ENCODE measurements at regions of chr6 and their contacts with region 1.

Region 1: GRCh38 chr6:129730477-129731165 is 20.6 kb upstream of the ARHGAP18 start:
- DNase-seq: peak in 2 of 4 experiments; percentile 18 to 69
- ATAC-seq: peak; percentile 75
- H3K4me3 ChIP-seq: no peak overlapping the region
- H3K27ac ChIP-seq: peak overlapping the region; percentile 79
- H3K4me1 ChIP-seq: peaks cover 10 to 26% of the 10 kb centered on the region in 2 experiments; a peak in 4 of 5 replicates
- H3K27me3 ChIP-seq: no peaks in the 10 kb centered on the region
- CTCF ChIP-seq: peak; percentile 61 to 75 (median 62); a peak in 4 of 6 replicates
- EP300 ChIP-seq: no peak; the same call in 1 of the 2 replicates
- POLR2A ChIP-seq: no peak
- RAD21 ChIP-seq: peak; percentile 89 to 97

Region 2: DNA sequence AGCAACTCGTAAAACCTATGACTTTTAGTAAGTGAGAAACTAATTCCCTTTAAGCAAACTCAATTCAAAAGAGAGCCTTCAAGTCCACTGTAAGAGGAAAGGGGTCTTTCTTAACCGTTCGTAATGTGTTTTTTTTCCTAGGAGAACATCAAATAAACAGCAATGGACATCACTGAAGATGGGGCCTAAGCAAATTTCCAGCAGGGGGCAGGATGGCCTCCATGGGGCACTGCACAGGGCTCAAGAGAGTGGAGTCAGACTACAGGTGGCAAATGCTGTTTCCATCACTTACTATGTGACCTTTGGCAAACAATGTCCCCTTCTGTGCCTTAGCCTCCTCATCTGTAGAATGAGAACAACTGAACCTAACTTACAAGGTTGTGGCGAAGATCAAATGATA is 109.4 kb before region 1 on chr6:
- CTCF ChIA-PET with region 1: interaction called, 4 read pairs
- POLR2A ChIA-PET with region 1: no interaction called
- in situ Hi-C with region 1: no loop called
- intact Hi-C with region 1: loop called (anchors 2 kb)
- DNase-seq: peak in 2 of 4 experiments; percentile 10 to 54
- ATAC-seq: peak; percentile 87
- H3K4me3 ChIP-seq: no peak overlapping the region
- H3K27ac ChIP-seq: no peak overlapping the region
- H3K4me1 ChIP-seq: no peaks in the 10 kb centered on the region
- H3K27me3 ChIP-seq: no peaks in the 10 kb centered on the region
- CTCF ChIP-seq: peak; percentile 51 to 54 (median 52); a peak in 5 of 6 replicates
- EP300 ChIP-seq: no peak
- POLR2A ChIP-seq: no peak
- RAD21 ChIP-seq: peak; percentile 39 to 68

Region 3: GRCh38 chr6:129672881-129673643 is 57.6 kb before region 1 on chr6:
- CTCF ChIA-PET with region 1: interaction called, 3 read pairs
- POLR2A ChIA-PET with region 1: interaction called, 3 read pairs
- in situ Hi-C with region 1: no loop called
- intact Hi-C with region 1: loop called (anchors 1 kb)
- DNase-seq: no peak
- ATAC-seq: no peak
- H3K4me3 ChIP-seq: no peak overlapping the region
- H3K27ac ChIP-seq: no peak overlapping the region
- H3K4me1 ChIP-seq: peaks cover 30 to 54% of the 10 kb centered on the region in 2 experiments
- H3K27me3 ChIP-seq: no peaks in the 10 kb centered on the region
- CTCF ChIP-seq: no peak
- EP300 ChIP-seq: no peak
- POLR2A ChIP-seq: no peak
- RAD21 ChIP-seq: no peak

Region 4: GRCh38 chr6:129774697-129775447 is 44.3 kb after region 1 on chr6:
- CTCF ChIA-PET with region 1: no interaction called
- POLR2A ChIA-PET with region 1: no interaction called
- in situ Hi-C with region 1: no loop called
- intact Hi-C with region 1: loop called (anchors 2 kb)
- DNase-seq: peak; percentile 76 to 89 (median 80)
- ATAC-seq: peak; percentile 96
- H3K4me3 ChIP-seq: no peak overlapping the region
- H3K27ac ChIP-seq: no peak overlapping the region; the same call in 2 of the 3 replicates
- H3K4me1 ChIP-seq: peaks cover 4 to 6% of the 10 kb centered on the region in 2 experiments; a peak in 3 of 5 replicates
- H3K27me3 ChIP-seq: no peaks in the 10 kb centered on the region
- CTCF ChIP-seq: peak; percentile 90 to 97 (median 90)
- EP300 ChIP-seq: no peak
- POLR2A ChIP-seq: no peak
- RAD21 ChIP-seq: peak; percentile 75 to 89

Region 5: GRCh38 chr6:129863664-129864063 is 133.0 kb after region 1 on chr6:
- CTCF ChIA-PET with region 1: no interaction called
- POLR2A ChIA-PET with region 1: no interaction called
- in situ Hi-C with region 1: no loop called
- intact Hi-C with region 1: loop called (anchors 2 kb)
- DNase-seq: no peak
- ATAC-seq: no peak
- H3K4me3 ChIP-seq: no peak overlapping the region
- H3K27ac ChIP-seq: no peak overlapping the region
- H3K4me1 ChIP-seq: no peaks in the 10 kb centered on the region
- H3K27me3 ChIP-seq: no peaks in the 10 kb centered on the region
- CTCF ChIP-seq: no peak
- EP300 ChIP-seq: no peak
- POLR2A ChIP-seq: no peak
- RAD21 ChIP-seq: no peak

Region 6: DNA sequence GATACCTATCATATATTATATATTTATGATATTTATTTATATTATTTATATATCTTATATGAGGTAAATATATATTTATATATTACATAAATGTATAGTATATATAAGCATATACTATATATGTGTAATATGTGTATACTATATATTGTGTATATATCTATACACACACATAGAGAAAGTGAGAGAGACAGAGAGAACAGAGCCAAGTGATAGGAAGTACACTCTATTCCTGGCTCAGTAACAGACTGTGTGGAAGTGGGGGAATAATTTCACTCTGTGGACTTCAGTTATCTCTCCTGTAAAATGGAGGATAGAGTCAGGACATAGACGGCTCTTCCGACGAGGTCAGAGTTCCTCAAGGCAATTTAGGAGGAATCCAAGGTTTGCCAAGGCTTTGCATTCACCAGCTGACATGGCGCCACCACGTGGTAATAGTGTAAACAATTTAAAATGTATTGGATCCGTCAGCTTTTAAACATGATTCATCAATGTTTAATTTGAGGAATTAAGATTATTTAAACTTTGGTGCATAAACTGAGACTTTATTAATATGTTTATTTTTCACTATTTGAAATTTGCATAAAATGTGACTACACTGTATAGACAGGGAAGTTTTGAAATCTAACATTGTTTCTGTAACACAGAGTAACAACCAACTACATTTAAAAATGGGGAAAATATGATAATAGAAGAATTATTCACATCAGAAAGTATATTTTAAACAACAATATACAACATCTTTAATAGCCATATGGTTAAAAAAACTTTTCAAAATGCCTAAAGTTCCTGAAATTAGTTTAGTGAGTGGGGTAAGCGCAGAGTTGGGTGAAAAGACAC is 205.9 kb after region 1 on chr6:
- CTCF ChIA-PET with region 1: no interaction called
- POLR2A ChIA-PET with region 1: no interaction called
- in situ Hi-C with region 1: no loop called
- intact Hi-C with region 1: loop called (anchors 5 kb)
- DNase-seq: peak; percentile 17 to 83 (median 24)
- ATAC-seq: peak; percentile 92
- H3K4me3 ChIP-seq: no peak overlapping the region
- H3K27ac ChIP-seq: no peak overlapping the region
- H3K4me1 ChIP-seq: no peaks in the 10 kb centered on the region; a peak in 1 of 5 replicates
- H3K27me3 ChIP-seq: no peaks in the 10 kb centered on the region; a peak in 1 of 5 replicates
- CTCF ChIP-seq: peak; percentile 64 to 78 (median 72)
- EP300 ChIP-seq: no peak
- POLR2A ChIP-seq: no peak
- RAD21 ChIP-seq: peak; percentile 77 to 82

Region 7: GRCh38 chr6:130020907-130021629 is 290.4 kb after region 1 on chr6:
- CTCF ChIA-PET with region 1: no interaction called
- POLR2A ChIA-PET with region 1: no interaction called
- in situ Hi-C with region 1: no loop called
- intact Hi-C with region 1: loop called (anchors 5 kb)
- DNase-seq: peak; percentile 55 to 90 (median 57)
- ATAC-seq: peak; percentile 83
- H3K4me3 ChIP-seq: peak overlapping the region; percentile 60
- H3K27ac ChIP-seq: peak overlapping the region; percentile 62; the same call in 1 of the 3 replicates
- H3K4me1 ChIP-seq: peaks cover 0 to 15% of the 10 kb centered on the region in 2 experiments; a peak in 2 of 5 replicates
- H3K27me3 ChIP-seq: no peaks in the 10 kb centered on the region
- CTCF ChIP-seq: peak; percentile 77 to 92 (median 86)
- EP300 ChIP-seq: no peak
- POLR2A ChIP-seq: no peak
- RAD21 ChIP-seq: peak; percentile 87 to 88